Thyroid gland (tissue), 4 donors: ENCODE measurements at regions of chr6 and their contacts with region 1.

Region 1: GRCh38 chr6:142935553-142936517 is 9.1 kb downstream of the HIVEP2 start:
- DNase-seq: peak; percentile 20 to 27
- H3K4me3 ChIP-seq: no peak overlapping the region
- H3K27ac ChIP-seq: no peak overlapping the region
- H3K4me1 ChIP-seq: peaks cover 9 to 11% of the 10 kb centered on the region in 2 donors
- H3K27me3 ChIP-seq: no peaks in the 10 kb centered on the region
- CTCF ChIP-seq: no peak
- POLR2A ChIP-seq: no peak

Region 2: GRCh38 chr6:142885182-142885867 is 50.5 kb before region 1 on chr6:
- intact Hi-C with region 1: loop called (anchors 10 kb)
- DNase-seq: peak; percentile 58 to 64
- H3K4me3 ChIP-seq: peak overlapping the region in 1 of 3 donors; percentile 16
- H3K27ac ChIP-seq: peak overlapping the region; percentile 53 to 76 (median 60)
- H3K4me1 ChIP-seq: peaks cover 14 to 26% of the 10 kb centered on the region in 2 donors
- H3K27me3 ChIP-seq: no peaks in the 10 kb centered on the region
- CTCF ChIP-seq: no peak
- POLR2A ChIP-seq: peak in 1 of 2 donors; percentile 56